CD8-positive, alpha-beta T cell (primary cell): ENCODE measurements at regions of chr4 and their contacts with region 1.

Region 1: GRCh38 chr4:119559044-119559647 is 69.5 kb downstream of the PDE5A start:
- DNase-seq: peak in 2 of 9 experiments; percentile 13 to 22
- ATAC-seq: no peak
- H3K4me3 ChIP-seq: no peak overlapping the region
- H3K4me3 Mint-ChIP-seq: no peak overlapping the region
- H3K27ac ChIP-seq: no peak overlapping the region
- H3K27ac Mint-ChIP-seq: no peak overlapping the region
- H3K4me1 ChIP-seq: no peaks in the 10 kb centered on the region
- H3K4me1 Mint-ChIP-seq: no peaks in the 10 kb centered on the region
- H3K27me3 ChIP-seq: no peaks in the 10 kb centered on the region
- H3K27me3 Mint-ChIP-seq: no peaks in the 10 kb centered on the region
- CTCF ChIP-seq: no peak

Region 2: DNA sequence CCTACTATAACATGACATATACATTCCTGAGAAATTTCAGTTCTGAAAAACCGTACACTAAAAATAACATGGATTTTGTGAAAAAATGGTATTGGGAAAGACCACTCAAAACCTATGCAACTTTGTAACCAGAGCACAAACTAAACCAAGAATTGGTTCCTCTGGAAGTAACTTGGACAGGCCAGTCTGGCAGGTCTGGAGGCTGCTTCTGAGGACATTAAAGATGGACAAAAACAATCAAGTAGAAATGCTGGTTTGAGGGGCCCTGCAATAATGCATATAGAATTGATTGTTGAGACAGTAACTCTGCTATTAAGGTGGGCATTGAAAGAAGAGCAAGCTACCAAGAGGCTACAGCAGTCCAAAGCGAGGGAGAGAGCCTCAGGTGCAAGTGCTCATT is 50.1 kb before region 1 on chr4:
- CTCF ChIA-PET with region 1: no interaction called
- POLR2A ChIA-PET with region 1: no interaction called
- intact Hi-C with region 1: loop called in 1 of 2 experiments (anchors 1 kb)
- DNase-seq: no peak
- ATAC-seq: no peak
- H3K4me3 ChIP-seq: no peak overlapping the region
- H3K4me3 Mint-ChIP-seq: no peak overlapping the region
- H3K27ac ChIP-seq: no peak overlapping the region
- H3K27ac Mint-ChIP-seq: peak overlapping the region; percentile 24
- H3K4me1 ChIP-seq: no peaks in the 10 kb centered on the region
- H3K4me1 Mint-ChIP-seq: no peaks in the 10 kb centered on the region
- H3K27me3 ChIP-seq: no peaks in the 10 kb centered on the region
- H3K27me3 Mint-ChIP-seq: no peaks in the 10 kb centered on the region
- CTCF ChIP-seq: no peak

Region 3: GRCh38 chr4:119628308-119629141 is 69.4 kb after region 1 on chr4 and contains the start of gene PDE5A:
- CTCF ChIA-PET with region 1: interaction called, 4 read pairs
- POLR2A ChIA-PET with region 1: no interaction called
- intact Hi-C with region 1: loop called in 1 of 2 experiments (anchors 5 kb)
- DNase-seq: peak; percentile 52 to 85 (median 76)
- ATAC-seq: peak; percentile 76
- H3K4me3 ChIP-seq: peak within 1 kb of the TSS; percentile 73 to 78
- H3K4me3 Mint-ChIP-seq: peak within 1 kb of the TSS; percentile 88
- H3K27ac ChIP-seq: peak within 1 kb of the TSS in 1 of 2 experiments; percentile 50
- H3K27ac Mint-ChIP-seq: peak within 1 kb of the TSS; percentile 71
- H3K4me1 ChIP-seq: peaks cover 9% of the 10 kb centered on the region
- H3K4me1 Mint-ChIP-seq: peaks cover 23% of the 10 kb centered on the region
- H3K27me3 ChIP-seq: no peaks in the 10 kb centered on the region
- H3K27me3 Mint-ChIP-seq: peaks cover 7% of the 10 kb centered on the region
- CTCF ChIP-seq: peak; percentile 74
- total RNA-seq, gene PDE5A: 0.11 to 0.25 TPM

Region 4: DNA sequence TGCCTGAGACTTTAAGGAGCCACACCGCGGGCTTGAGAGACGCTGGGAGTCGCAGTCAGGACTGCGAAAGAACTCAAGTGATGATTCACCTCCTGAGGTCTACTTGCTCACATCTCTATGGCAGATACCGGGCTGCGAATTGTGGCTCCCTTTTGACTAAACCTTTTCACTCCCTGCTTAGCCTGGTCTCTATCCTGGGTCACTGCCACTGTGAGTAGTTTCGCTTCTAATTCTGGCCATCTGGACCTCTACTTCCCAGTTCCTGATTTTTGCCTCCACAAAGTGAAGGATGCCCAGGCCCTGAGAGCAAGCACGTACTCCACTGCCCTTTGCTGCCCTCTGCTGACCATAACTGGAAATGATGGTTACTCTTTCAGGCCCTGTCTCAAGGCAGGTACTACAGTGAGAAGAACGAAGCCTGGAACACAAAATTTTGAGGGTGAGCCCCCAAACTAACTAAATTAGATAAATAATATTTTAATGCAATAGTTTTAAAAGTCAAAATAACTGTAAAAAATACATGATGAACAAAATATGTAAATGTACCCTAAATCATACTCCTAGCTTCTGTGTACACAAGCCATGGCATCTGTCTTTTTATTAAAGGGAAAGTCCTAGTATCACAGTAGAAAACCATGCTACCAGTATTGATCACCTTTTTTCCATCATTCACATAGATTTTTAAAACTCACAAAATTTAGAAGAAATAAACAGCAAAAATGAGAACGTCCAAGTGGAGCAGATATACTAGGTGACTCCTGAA is 490.8 kb after region 1 on chr4:
- CTCF ChIA-PET with region 1: interaction called, 3 read pairs
- POLR2A ChIA-PET with region 1: no interaction called
- intact Hi-C with region 1: loop called (anchors 1 to 2 kb)
- DNase-seq: peak; percentile 46 to 80 (median 73)
- ATAC-seq: peak; percentile 98
- H3K4me3 ChIP-seq: no peak overlapping the region
- H3K4me3 Mint-ChIP-seq: peak overlapping the region; percentile 54
- H3K27ac ChIP-seq: no peak overlapping the region
- H3K27ac Mint-ChIP-seq: no peak overlapping the region
- H3K4me1 ChIP-seq: no peaks in the 10 kb centered on the region
- H3K4me1 Mint-ChIP-seq: peaks cover 2% of the 10 kb centered on the region
- H3K27me3 ChIP-seq: no peaks in the 10 kb centered on the region
- H3K27me3 Mint-ChIP-seq: no peaks in the 10 kb centered on the region
- CTCF ChIP-seq: peak; percentile 90